ENCODE measurements at regions of chr17 and their contacts with region 1.

Region 1: DNA sequence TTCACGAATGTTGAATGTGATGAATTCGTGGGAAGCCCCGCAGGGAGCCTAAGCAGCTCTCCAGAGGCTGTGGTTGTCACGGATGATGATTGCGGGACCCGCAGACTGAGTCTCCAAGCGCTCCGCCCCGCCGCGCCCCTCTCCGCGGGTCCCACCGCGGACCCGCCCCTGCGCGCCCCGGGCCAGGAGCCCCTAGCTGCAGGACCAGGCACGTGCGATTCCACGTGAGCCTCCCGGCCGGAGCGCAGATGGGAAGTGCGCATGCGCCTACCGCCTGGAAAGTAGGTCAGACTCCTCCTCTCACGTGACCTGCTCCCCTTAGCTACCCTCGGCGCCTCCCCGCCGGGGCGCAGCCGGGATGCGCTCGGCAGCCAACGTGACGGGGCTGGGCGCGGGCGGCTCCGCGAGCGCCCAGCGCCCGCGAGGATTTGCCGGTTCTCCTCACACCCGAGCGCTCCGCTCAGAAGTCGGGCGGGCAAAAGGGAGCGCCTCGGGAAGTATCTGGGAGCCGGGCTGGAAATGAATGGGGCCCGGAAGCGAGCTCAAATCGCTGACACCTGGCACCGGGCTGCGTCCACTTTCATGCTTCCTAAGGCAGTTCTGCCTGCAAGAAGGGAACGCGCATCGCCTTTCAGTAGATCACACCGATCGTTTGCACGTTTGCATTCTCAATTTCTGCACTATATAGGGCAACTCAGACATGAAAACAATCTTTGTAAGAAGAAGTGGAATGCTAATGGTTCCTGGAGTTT is 26.4 kb upstream of the HLF start:
- DNase-seq: peak; percentile 98
- H3K4me3 ChIP-seq: peak overlapping the region; percentile 53
- H3K27ac ChIP-seq: peak overlapping the region; percentile 77
- H3K4me1 ChIP-seq: peaks cover 28% of the 10 kb centered on the region
- H3K27me3 ChIP-seq: no peaks in the 10 kb centered on the region
- CTCF ChIP-seq: no peak

Region 2: GRCh38 chr17:55264645-55265298 is 26.4 kb after region 1 on chr17 and contains the start of gene HLF:
- CTCF ChIA-PET with region 1: no interaction called
- POLR2A ChIA-PET with region 1: no interaction called
- intact Hi-C with region 1: loop called (anchors 1 kb)
- DNase-seq: peak; percentile 90
- H3K4me3 ChIP-seq: peak within 1 kb of the TSS; percentile 48
- H3K27ac ChIP-seq: no peak within 1 kb of the TSS
- H3K4me1 ChIP-seq: peaks cover 9% of the 10 kb centered on the region
- H3K27me3 ChIP-seq: no peaks in the 10 kb centered on the region
- CTCF ChIP-seq: no peak
- total RNA-seq, gene HLF: 3.2 and 5.1 TPM in 2 replicates

Region 3: DNA sequence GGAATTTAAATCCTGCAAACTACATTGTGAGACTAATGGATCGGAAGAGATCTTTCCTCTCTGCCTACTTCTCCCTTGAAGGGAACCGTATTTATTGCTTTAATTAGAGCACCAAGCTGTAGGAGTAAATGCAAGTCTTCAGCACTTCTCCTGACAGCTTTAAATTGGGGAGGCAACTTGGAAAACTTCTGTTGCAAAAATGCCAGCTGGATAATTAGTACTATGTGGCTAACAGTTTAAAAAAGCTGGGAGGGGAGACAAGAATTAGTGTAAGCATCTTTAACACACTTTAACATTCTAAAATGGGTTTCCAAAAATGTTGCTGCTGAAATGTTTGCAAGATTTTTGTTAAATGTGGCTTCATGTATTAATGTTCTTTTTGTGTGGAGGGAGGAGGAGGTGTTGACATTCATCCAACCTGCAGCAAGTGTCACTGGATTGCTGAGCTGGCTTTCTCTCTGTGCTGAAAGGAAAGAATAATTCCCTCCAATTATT is 621.0 kb after region 1 on chr17:
- CTCF ChIA-PET with region 1: no interaction called
- POLR2A ChIA-PET with region 1: no interaction called
- intact Hi-C with region 1: no loop called
- DNase-seq: no peak
- H3K4me3 ChIP-seq: no peak overlapping the region
- H3K27ac ChIP-seq: no peak overlapping the region
- H3K4me1 ChIP-seq: no peaks in the 10 kb centered on the region
- H3K27me3 ChIP-seq: peaks cover 52% of the 10 kb centered on the region
- CTCF ChIP-seq: no peak

Region 4: GRCh38 chr17:55872374-55872773 is 634.0 kb after region 1 on chr17:
- CTCF ChIA-PET with region 1: interaction called, 11 read pairs
- POLR2A ChIA-PET with region 1: no interaction called
- intact Hi-C with region 1: no loop called
- DNase-seq: no peak
- H3K4me3 ChIP-seq: no peak overlapping the region
- H3K27ac ChIP-seq: no peak overlapping the region
- H3K4me1 ChIP-seq: no peaks in the 10 kb centered on the region
- H3K27me3 ChIP-seq: peaks cover 18% of the 10 kb centered on the region
- CTCF ChIP-seq: no peak